RWPE1 (cell line): ENCODE measurements at regions of chr6 and their contacts with region 1.

Region 1: GRCh38 chr6:160137989-160138835 is 16.6 kb downstream of the SLC22A1 start:
- DNase-seq: peak; percentile 53
- H3K27ac ChIP-seq: peak overlapping the region; percentile 71
- CTCF ChIP-seq: peak; percentile 84

Region 2: GRCh38 chr6:160455541-160456213 is 317.5 kb after region 1 on chr6:
- CTCF ChIA-PET with region 1: interaction called, 17 read pairs
- POLR2A ChIA-PET with region 1: no interaction called
- DNase-seq: peak; percentile 71
- H3K27ac ChIP-seq: peak overlapping the region; percentile 60
- CTCF ChIP-seq: peak; percentile 94